ENCODE measurements at regions of chr20 and their contacts with region 1.

Region 1: DNA sequence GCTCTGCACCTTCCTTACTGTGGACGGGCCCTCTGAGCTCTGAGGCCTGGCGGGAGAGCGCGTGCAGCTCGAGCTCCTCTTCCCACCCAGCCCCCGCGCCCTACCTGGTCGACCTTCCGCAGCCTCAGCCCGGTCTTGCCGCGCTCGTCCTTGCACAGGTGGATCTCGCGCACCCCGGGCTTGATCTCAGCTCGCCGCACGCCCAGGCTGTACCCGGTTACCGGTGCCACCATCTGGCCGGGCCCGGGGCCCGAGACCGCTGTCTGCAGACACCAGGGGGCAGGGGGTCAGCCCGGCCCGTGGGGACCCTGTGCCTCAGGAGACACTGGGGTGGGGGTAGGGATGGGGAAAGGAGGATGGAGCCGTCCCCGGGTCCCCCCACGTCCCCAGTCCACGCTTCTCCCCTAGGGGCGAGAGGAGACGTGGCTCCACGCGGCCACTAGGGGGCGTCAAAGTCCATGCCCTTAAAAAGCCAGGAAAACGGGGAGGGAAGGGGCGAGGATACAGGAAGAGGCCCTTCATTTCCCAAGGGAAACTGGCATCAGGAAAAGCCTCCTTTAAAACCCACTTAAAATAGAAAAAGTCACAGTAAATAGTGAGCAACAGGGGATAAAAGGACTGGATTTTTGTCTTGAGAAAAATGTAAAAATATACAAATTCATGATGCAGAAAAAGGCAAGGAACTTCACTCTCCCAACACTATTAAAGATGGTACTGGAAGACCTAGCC is 15.5 kb downstream of the SDCBP2 start:
- DNase-seq: peak; percentile 71
- ATAC-seq: peak; percentile 83
- H3K4me3 ChIP-seq: no peak overlapping the region
- H3K27ac ChIP-seq: no peak overlapping the region
- H3K4me1 ChIP-seq: peaks cover 18% of the 10 kb centered on the region
- H3K27me3 ChIP-seq: peaks cover 0 to 3% of the 10 kb centered on the region in 2 experiments; a peak in 3 of 5 replicates
- CTCF ChIP-seq: peak; percentile 97
- EP300 ChIP-seq: no peak
- POLR2A ChIP-seq: no peak
- RAD21 ChIP-seq: peak; percentile 95

Region 2: GRCh38 chr20:1357921-1358671 is 44.7 kb after region 1 on chr20:
- CTCF ChIA-PET with region 1: no interaction called
- POLR2A ChIA-PET with region 1: no interaction called
- in situ Hi-C with region 1: no loop called
- intact Hi-C with region 1: no loop called
- DNase-seq: no peak
- ATAC-seq: no peak
- H3K4me3 ChIP-seq: no peak overlapping the region
- H3K27ac ChIP-seq: no peak overlapping the region
- H3K4me1 ChIP-seq: no peaks in the 10 kb centered on the region
- H3K27me3 ChIP-seq: no peaks in the 10 kb centered on the region
- CTCF ChIP-seq: no peak
- EP300 ChIP-seq: no peak
- POLR2A ChIP-seq: no peak
- RAD21 ChIP-seq: no peak

Region 3: GRCh38 chr20:1437235-1437904 is 124.0 kb after region 1 on chr20:
- CTCF ChIA-PET with region 1: interaction called, 122 read pairs
- POLR2A ChIA-PET with region 1: interaction called, 4 read pairs
- in situ Hi-C with region 1: loop called (anchors 5 kb)
- intact Hi-C with region 1: loop called (anchors 1 kb)
- DNase-seq: peak; percentile 83
- ATAC-seq: peak; percentile 68
- H3K4me3 ChIP-seq: no peak overlapping the region
- H3K27ac ChIP-seq: no peak overlapping the region
- H3K4me1 ChIP-seq: no peaks in the 10 kb centered on the region
- H3K27me3 ChIP-seq: no peaks in the 10 kb centered on the region
- CTCF ChIP-seq: peak; percentile 98
- EP300 ChIP-seq: no peak
- POLR2A ChIP-seq: no peak
- RAD21 ChIP-seq: peak; percentile 85

Region 4: GRCh38 chr20:1503564-1504227 is 190.3 kb after region 1 on chr20:
- CTCF ChIA-PET with region 1: interaction called, 21 read pairs
- POLR2A ChIA-PET with region 1: no interaction called
- in situ Hi-C with region 1: no loop called
- intact Hi-C with region 1: loop called (anchors 1 kb)
- DNase-seq: peak; percentile 94
- ATAC-seq: peak; percentile 100
- H3K4me3 ChIP-seq: no peak overlapping the region
- H3K27ac ChIP-seq: no peak overlapping the region
- H3K4me1 ChIP-seq: peaks cover 9% of the 10 kb centered on the region; the same call in 1 of the 2 replicates
- H3K27me3 ChIP-seq: peaks cover 0 to 6% of the 10 kb centered on the region in 2 experiments; a peak in 3 of 5 replicates
- CTCF ChIP-seq: peak; percentile 97
- EP300 ChIP-seq: no peak
- POLR2A ChIP-seq: no peak
- RAD21 ChIP-seq: peak; percentile 95